Aorta (tissue), 5 donors: ENCODE measurements at regions of chr22 and their contacts with region 1.

Region 1: GRCh38 chr22:40156001-40156516 is 21.7 kb upstream of the TNRC6B start:
- DNase-seq: no peak
- ATAC-seq: peak; percentile 67
- H3K4me3 ChIP-seq: no peak overlapping the region
- H3K27ac ChIP-seq: peak overlapping the region in 1 of 2 donors; percentile 75
- H3K4me1 ChIP-seq: peaks cover 0 to 6% of the 10 kb centered on the region in 2 donors
- H3K27me3 ChIP-seq: no peaks in the 10 kb centered on the region

Region 2: GRCh38 chr22:40055143-40055883 is 100.7 kb before region 1 on chr22:
- intact Hi-C with region 1: loop called in 1 of 2 experiments (anchors 10 kb)
- DNase-seq: no peak
- ATAC-seq: no peak
- H3K4me3 ChIP-seq: no peak overlapping the region
- H3K27ac ChIP-seq: no peak overlapping the region
- H3K4me1 ChIP-seq: no peaks in the 10 kb centered on the region
- H3K27me3 ChIP-seq: no peaks in the 10 kb centered on the region

Region 3: DNA sequence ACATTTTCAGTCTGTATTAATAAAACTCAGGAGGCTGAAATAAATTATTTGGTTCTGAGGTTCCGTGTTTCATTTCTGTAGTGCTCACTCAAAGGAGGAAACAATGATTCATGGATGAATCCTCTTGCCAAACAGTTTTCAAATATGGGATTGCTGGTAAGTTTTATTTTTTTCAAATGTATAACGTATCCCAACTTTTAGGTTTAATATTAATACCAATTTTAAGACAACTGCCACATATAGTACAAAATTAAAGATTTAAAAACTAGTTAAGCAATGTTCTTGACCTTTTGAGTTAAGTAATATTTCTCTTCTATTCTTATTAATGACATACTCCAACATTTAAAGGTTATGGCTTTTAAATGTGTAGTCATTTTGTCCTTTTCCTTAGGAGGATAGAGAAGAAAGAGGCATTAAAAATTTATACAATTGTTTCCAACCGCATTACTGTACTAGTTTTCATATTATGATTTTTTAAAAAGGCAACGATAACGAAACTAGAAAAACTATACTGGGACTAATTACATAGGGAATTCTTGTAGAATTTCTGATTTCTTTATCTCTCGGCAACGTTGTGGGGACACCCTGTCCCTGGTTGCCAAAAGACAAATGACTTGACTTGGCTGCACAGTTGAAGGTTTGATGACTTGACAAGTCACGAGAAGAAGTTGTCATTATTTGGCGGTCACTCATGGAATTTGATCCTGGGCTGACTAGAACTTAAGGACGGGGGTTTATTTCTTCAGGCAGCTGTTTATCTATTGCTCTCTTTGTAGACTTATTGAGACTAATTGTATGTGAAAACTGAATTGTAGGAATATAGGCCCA is 121.2 kb after region 1 on chr22:
- intact Hi-C with region 1: no loop called
- DNase-seq: no peak
- ATAC-seq: peak; percentile 65
- H3K4me3 ChIP-seq: peak overlapping the region in 1 of 2 donors; percentile 50
- H3K27ac ChIP-seq: peak overlapping the region in 1 of 2 donors; percentile 55
- H3K4me1 ChIP-seq: peaks cover 3% of the 10 kb centered on the region in 2 donors
- H3K27me3 ChIP-seq: no peaks in the 10 kb centered on the region